AG04450 (cell line): ENCODE measurements at regions of chr5 and their contacts with region 1.

Region 1: GRCh38 chr5:154520861-154521453 is 42.9 kb upstream of the HAND1 start:
- DNase-seq: no peak
- H3K4me3 ChIP-seq: no peak overlapping the region
- H3K27ac ChIP-seq: no peak overlapping the region
- H3K27me3 ChIP-seq: peaks cover 46% of the 10 kb centered on the region
- CTCF ChIP-seq: peak; percentile 75

Region 2: DNA sequence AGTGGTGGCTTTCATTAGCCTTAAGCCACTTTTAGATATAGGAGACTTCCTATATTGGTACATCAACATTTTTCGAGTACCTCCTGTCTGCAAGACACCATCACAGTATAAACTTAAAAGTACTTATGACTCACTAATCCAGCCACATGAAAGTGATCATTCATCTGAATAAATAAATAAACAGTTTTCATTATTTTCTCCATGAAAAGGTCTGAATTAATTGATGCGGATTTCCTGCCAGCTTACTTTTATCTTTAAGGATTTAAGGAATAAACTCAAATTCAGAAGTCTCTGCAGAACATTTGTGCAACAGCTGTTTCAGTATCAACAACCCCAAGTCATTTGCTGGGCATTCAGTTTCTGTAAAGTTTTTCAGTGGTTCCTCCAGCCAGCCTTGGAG is 71.2 kb before region 1 on chr5:
- CTCF ChIA-PET with region 1: no interaction called
- POLR2A ChIA-PET with region 1: no interaction called
- DNase-seq: no peak
- H3K4me3 ChIP-seq: no peak overlapping the region
- H3K27ac ChIP-seq: no peak overlapping the region
- H3K27me3 ChIP-seq: no peaks in the 10 kb centered on the region
- CTCF ChIP-seq: no peak

Region 3: DNA sequence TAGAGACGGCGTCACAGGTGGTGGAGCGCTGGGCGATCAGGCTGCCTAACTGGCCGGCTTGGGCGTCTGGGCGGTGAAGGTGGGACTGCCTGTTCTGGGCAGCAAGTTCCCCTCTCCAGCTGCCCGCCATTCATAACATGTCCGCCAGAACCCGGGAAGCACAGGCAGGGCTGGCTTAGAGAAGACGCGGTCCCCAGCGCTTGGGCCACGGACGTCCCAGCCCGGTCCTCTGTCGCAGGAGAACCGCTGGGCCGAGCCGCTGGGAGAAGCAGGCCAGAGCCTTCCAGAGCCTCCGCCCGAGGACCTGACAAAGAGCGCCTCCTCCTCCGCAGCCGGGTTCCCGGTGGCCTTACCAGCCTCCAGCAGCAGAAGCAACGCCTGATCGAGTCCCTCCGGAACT is 27.7 kb before region 1 on chr5:
- CTCF ChIA-PET with region 1: interaction called, 19 read pairs
- POLR2A ChIA-PET with region 1: no interaction called
- DNase-seq: no peak
- H3K4me3 ChIP-seq: no peak overlapping the region
- H3K27ac ChIP-seq: no peak overlapping the region
- H3K27me3 ChIP-seq: peaks cover 52% of the 10 kb centered on the region
- CTCF ChIP-seq: no peak

Region 4: DNA sequence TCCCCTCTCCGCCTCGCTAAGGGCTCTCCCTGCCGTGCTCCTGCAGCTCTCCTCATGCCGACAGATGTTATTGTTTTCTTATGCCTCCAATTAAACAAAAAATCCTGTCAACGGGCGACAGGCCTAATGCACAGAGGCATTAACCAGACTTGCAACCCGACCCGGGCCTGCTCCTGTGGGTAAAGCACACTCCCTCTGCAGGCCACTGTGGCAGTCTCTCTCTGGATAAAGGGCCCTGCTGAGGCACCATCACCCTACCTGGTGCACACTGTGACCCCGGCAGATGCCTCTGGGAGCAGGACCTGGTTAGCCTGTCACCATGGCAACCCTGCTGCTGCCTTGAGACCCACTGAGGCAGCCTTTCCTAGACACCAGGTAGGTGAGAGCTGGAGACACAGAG is 15.3 kb before region 1 on chr5:
- CTCF ChIA-PET with region 1: interaction called, 11 read pairs
- POLR2A ChIA-PET with region 1: no interaction called
- DNase-seq: no peak
- H3K4me3 ChIP-seq: no peak overlapping the region
- H3K27ac ChIP-seq: no peak overlapping the region
- H3K27me3 ChIP-seq: peaks cover 27% of the 10 kb centered on the region
- CTCF ChIP-seq: no peak

Region 5: DNA sequence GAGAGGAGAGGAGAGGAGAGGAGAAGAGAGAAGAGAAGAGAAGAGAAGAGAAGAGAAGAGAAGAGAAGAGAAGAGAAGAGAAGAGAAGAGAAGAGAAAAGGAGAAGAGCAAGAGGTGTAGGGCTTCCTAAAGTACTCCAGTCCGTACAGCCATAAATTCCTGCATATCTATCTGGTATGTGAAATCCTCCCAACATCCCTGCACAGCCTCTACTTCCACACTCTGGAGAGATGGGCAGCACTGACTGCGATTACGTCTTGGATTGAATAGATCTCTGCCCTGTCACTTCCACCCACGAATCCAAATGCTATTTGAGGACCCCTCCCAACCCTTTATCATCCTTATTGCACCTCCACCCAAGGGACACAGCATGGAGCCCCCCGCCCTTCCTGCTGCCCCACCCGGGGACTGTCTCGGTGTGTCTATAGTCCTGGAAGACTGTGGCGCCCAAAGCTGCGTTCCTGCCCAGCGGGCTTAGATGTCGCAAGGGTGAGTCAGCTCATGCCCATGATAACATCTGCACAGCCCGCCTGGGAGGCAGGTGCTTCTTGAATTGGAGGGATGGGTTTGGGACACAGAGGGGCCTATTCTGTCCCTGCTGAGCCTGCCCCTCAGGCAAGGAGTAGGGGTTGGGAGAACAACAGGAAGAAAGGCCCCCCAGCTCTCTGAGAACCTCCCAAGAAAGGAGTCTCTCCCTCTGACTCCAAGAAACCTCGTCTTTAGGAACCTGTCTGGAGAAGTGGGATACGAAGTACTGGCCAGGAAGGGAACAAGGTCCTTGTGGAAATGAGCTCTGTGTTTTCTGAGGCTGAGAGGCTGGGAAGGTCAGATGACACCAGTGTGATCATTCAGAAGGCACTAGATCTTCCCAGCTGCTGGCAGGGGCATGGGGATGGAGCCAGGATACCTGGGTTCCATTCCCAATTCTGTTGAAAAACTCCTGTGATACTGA is 62.9 kb after region 1 on chr5:
- CTCF ChIA-PET with region 1: no interaction called
- POLR2A ChIA-PET with region 1: no interaction called
- DNase-seq: no peak
- H3K4me3 ChIP-seq: no peak overlapping the region
- H3K27ac ChIP-seq: no peak overlapping the region
- H3K27me3 ChIP-seq: peaks cover 4% of the 10 kb centered on the region
- CTCF ChIP-seq: no peak